Breast epithelium (tissue), 4 donors: ENCODE measurements at regions of chr21 and their contacts with region 1.

Region 1: DNA sequence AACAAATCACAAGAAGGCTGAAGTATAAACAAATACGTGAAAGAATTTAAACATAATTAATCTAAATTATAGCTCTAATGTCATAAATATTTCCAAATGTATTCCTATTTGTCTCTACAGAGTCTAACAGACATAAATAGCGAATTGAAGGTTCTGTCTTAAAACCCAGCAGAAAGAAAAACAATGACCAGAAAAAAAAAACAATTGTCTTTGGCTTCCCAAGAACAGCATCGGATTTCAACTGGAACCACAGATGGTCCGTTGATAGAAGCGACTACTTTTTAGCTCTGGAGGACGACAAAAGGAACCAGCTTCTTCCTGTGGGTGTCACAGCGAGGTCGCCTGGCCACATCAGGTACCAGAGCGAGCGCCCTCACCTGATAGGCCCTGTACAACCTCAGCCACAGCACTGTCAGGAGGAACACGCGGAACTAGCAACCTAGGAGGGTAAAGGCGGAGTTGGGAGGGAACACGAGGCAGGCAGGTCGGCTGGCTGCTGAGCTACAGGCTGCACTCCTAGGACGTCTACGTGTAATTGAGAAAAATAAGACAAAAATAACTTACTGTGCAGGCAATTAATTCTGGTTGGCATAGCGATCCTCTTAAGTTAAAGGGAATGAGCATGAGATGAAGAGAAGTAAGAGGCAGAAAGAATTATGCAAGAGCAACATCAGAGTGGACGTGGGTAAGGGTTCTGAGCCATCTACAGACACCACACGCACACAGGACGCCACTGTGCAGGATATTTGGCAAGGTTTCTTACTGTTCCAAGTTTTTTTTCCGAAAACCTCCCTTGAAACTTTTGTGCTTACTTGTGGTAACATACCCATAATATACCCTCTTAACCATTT is 16.7 kb upstream of the PRDM15 start:
- DNase-seq: no peak
- H3K4me3 ChIP-seq: no peak overlapping the region
- H3K27ac ChIP-seq: no peak overlapping the region
- H3K4me1 ChIP-seq: no peaks in the 10 kb centered on the region
- H3K27me3 ChIP-seq: no peaks in the 10 kb centered on the region
- CTCF ChIP-seq: no peak
- POLR2A ChIP-seq: no peak

Region 2: DNA sequence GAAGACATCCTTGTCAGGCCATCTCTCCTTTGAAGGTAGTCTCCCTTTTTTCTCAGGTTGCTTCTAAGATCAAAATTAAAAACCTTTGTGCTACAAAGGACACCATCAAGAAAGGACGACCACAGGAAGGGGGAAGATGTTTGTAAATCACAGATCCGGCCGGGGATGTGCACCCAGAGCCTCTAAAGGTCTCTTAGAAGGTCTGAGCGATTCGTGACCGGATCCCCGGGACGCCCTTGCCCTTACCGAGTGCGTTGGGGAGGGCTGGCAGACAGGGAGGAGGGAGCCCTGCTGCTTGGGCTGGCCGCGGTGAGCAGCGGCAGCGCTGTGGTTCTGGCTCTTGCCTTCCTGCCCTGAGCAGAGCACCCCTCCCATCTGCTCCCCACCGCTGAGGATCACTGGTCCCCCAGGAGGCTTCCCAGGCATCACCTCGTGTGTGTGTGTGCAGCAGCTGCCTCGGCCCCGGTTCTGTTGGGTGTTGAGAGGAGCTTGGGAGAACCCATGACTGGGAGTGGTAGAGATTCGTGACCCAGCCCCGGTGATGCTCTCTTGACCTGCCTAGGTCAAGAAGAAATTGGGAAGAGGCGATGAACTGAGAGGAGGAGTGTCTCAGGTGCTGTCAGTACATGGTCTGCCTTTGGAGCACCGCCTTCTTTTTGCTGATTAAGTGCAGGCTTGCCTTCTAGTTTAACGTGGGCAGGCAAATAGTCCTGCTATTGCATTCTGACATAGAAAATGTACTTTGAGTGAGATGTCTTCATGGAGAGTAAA is 2003.6 kb after region 1 on chr21:
- intact Hi-C with region 1: loop called (anchors 5 kb)
- DNase-seq: no peak
- H3K4me3 ChIP-seq: no peak overlapping the region
- H3K27ac ChIP-seq: no peak overlapping the region
- H3K4me1 ChIP-seq: no peaks in the 10 kb centered on the region
- H3K27me3 ChIP-seq: no peaks in the 10 kb centered on the region
- CTCF ChIP-seq: no peak
- POLR2A ChIP-seq: no peak